Activated CD4-positive, alpha-beta T cell treated with anti-CD3 and anti-CD28 coated beads for 36 hours (primary cell): ENCODE measurements at regions of chr16 and their contacts with region 1.

Region 1: DNA sequence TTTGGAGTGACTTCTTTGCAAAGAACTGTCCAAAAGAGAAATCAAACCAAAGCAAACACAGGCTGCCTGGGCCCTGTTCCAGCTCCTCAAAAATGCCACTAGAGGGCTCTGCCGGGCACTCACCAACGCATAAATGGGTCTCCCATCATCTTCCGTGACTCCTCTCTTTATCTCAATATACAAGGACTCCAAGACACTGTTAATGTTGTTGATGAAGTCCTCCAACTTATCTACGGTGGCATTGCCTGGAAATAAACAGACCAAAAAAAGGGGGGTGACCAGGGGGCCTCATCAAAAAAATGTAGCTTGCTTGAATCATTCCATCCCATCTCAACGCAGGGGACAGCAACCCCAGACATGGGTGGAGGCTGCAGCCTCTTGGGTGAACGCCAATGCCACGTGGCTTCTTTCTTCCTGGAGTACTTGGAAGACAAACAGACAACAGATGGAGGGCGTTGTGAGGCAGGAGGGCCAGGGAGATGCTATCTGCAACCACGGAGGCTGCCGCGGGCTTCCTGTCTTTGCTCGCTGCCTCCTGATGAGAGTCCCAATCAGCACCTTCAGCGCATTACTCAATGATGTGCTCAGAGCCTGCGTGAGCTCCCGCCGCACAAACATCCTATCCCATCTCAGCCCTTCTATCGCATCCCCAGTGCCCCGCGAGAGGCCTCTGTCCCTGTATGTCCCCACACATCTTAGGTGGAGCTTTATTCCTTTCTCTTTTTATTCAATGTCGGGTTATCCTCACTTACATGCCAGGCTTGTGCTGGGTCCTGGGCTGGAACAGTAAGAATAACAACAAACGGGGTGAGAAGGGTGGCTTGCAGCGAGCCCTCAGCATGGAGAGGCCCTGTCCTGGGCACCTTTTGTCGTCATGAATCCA is 32.0 kb downstream of the KDM8 start:
- DNase-seq: peak; percentile 90
- ATAC-seq: peak; percentile 44
- H3K4me3 Mint-ChIP-seq: peak overlapping the region; percentile 65
- H3K27ac Mint-ChIP-seq: peak overlapping the region; percentile 100
- H3K4me1 Mint-ChIP-seq: peaks cover 99% of the 10 kb centered on the region
- H3K27me3 Mint-ChIP-seq: no peaks in the 10 kb centered on the region

Region 2: GRCh38 chr16:26598061-26598460 is 637.2 kb before region 1 on chr16:
- CTCF ChIA-PET with region 1: no interaction called
- POLR2A ChIA-PET with region 1: no interaction called
- intact Hi-C with region 1: loop called in 1 of 2 experiments (anchors 5 kb)
- DNase-seq: peak; percentile 83
- ATAC-seq: peak; percentile 91
- H3K4me3 Mint-ChIP-seq: peak overlapping the region; percentile 20
- H3K27ac Mint-ChIP-seq: peak overlapping the region; percentile 82
- H3K4me1 Mint-ChIP-seq: peaks cover 54% of the 10 kb centered on the region
- H3K27me3 Mint-ChIP-seq: peaks cover 19% of the 10 kb centered on the region

Region 3: GRCh38 chr16:27203429-27204231 is 31.7 kb before region 1 on chr16 and contains the start of gene KDM8:
- CTCF ChIA-PET with region 1: interaction called, 20 read pairs
- POLR2A ChIA-PET with region 1: interaction called, 8 read pairs
- intact Hi-C with region 1: loop called (anchors 1 kb)
- DNase-seq: peak; percentile 100
- ATAC-seq: peak; percentile 90
- H3K4me3 Mint-ChIP-seq: peak within 1 kb of the TSS; percentile 89
- H3K27ac Mint-ChIP-seq: peak within 1 kb of the TSS; percentile 100
- H3K4me1 Mint-ChIP-seq: peaks cover 47% of the 10 kb centered on the region
- H3K27me3 Mint-ChIP-seq: no peaks in the 10 kb centered on the region
- total RNA-seq, gene KDM8: 9.8 to 10.4 TPM

Region 4: GRCh38 chr16:27268376-27269299 is 33.3 kb after region 1 on chr16 and contains the start of gene NSMCE1:
- CTCF ChIA-PET with region 1: interaction called, 21 read pairs
- POLR2A ChIA-PET with region 1: interaction called, 12 read pairs
- intact Hi-C with region 1: loop called (anchors 1 kb)
- DNase-seq: peak; percentile 99
- ATAC-seq: peak; percentile 94
- H3K4me3 Mint-ChIP-seq: peak within 1 kb of the TSS; percentile 90
- H3K27ac Mint-ChIP-seq: peak within 1 kb of the TSS; percentile 95
- H3K4me1 Mint-ChIP-seq: peaks cover 72% of the 10 kb centered on the region
- H3K27me3 Mint-ChIP-seq: no peaks in the 10 kb centered on the region
- total RNA-seq, gene NSMCE1: 110 to 127 TPM

Region 5: GRCh38 chr16:27313422-27314160 is 78.3 kb after region 1 on chr16 and contains the start of gene IL4R:
- CTCF ChIA-PET with region 1: interaction called, 80 read pairs
- POLR2A ChIA-PET with region 1: interaction called, 111 read pairs
- intact Hi-C with region 1: loop called (anchors 1 kb)
- DNase-seq: peak; percentile 87
- ATAC-seq: no peak
- H3K4me3 Mint-ChIP-seq: peak within 1 kb of the TSS; percentile 90
- H3K27ac Mint-ChIP-seq: peak within 1 kb of the TSS; percentile 97
- H3K4me1 Mint-ChIP-seq: peaks cover 44% of the 10 kb centered on the region
- H3K27me3 Mint-ChIP-seq: no peaks in the 10 kb centered on the region
- total RNA-seq, gene IL4R: 185 to 229 TPM

Region 6: DNA sequence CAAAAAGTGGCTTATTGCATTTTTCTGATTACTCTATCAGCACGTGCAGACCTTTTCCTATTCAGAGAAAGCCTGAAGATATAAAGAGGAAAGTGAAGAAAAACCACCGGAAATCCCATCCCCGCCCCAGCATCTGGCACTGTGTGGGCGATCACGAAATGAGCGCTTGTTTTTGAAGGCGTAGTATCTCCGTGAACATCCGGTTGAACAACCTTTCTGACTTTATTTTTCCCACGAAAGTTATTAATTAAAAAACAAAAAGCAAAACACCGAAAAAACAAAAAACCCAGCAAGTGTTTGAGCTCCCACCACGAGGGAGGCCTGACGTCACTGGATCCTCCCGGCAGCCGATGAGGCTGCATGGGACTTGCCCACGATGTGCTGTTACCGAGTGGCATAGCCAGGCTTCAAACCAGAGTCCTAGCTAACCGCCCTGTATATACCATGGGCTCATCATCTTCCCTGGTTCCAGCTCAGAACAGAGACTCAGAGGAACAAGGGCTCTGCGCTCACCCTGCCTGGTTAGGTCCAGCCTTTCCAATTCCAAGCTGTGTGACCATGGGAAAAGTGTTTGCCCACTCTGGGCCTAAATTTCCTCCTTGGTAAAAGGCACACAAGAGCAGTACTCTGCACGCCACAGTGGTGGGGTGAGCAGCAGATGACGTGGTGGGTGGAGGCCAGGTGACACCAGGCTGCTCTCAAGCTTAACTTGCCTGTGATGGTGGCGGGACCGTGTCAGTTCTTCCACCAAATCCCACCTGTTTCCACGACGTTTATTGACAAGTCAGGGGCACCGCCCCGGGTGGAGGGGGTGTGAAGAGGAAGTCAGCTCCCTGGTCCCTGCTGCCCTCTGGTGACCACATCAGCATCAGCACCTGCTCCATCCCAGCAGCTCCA is 132.4 kb after region 1 on chr16:
- CTCF ChIA-PET with region 1: interaction called, 61 read pairs
- POLR2A ChIA-PET with region 1: interaction called, 20 read pairs
- intact Hi-C with region 1: loop called (anchors 1 kb)
- DNase-seq: peak; percentile 95
- ATAC-seq: peak; percentile 74
- H3K4me3 Mint-ChIP-seq: peak overlapping the region; percentile 58
- H3K27ac Mint-ChIP-seq: peak overlapping the region; percentile 98
- H3K4me1 Mint-ChIP-seq: peaks cover 79% of the 10 kb centered on the region
- H3K27me3 Mint-ChIP-seq: no peaks in the 10 kb centered on the region

Region 7: DNA sequence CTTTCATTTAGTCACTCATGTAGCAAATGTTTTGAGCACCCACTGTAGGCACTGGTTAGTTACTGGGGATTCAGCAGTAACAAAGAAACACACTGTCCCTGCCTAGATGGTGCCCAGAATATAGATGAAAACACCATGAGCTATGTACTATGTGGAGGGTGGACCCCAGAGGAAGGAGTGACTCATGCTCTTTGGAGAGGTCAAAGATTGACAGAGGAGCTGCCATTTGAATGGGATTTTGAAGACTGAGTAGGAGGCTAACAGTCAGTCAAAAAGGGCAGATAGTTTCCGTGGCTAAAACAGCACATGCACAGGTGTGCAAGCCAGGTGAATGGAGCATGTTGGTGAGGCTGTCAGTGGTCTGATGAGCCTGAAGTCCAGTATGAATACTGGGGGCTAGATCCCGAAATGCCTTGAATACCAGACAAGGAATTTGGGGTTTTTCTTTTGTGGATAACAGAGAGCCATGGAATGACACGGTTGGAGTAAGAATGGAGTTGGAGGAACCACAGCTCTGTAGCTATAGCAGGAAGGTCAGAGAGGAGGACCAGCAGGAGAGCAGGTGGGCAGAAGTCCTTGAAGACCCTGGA is 172.8 kb after region 1 on chr16:
- CTCF ChIA-PET with region 1: interaction called, 4 read pairs
- POLR2A ChIA-PET with region 1: interaction called, 13 read pairs
- intact Hi-C with region 1: loop called (anchors 1 to 2 kb)
- DNase-seq: peak; percentile 71
- ATAC-seq: peak; percentile 59
- H3K4me3 Mint-ChIP-seq: peak overlapping the region; percentile 99
- H3K27ac Mint-ChIP-seq: peak overlapping the region; percentile 97
- H3K4me1 Mint-ChIP-seq: peaks cover 73% of the 10 kb centered on the region
- H3K27me3 Mint-ChIP-seq: no peaks in the 10 kb centered on the region